ENCODE measurements at regions of chr14 and their contacts with region 1.

Region 1: GRCh38 chr14:58549105-58549755 is 88.5 kb upstream of the DACT1 start:
- DNase-seq: no peak
- ATAC-seq: no peak
- H3K4me3 Mint-ChIP-seq: no peak overlapping the region
- H3K27ac Mint-ChIP-seq: no peak overlapping the region
- H3K4me1 Mint-ChIP-seq: peaks cover 6% of the 10 kb centered on the region
- H3K27me3 Mint-ChIP-seq: no peaks in the 10 kb centered on the region

Region 2: DNA sequence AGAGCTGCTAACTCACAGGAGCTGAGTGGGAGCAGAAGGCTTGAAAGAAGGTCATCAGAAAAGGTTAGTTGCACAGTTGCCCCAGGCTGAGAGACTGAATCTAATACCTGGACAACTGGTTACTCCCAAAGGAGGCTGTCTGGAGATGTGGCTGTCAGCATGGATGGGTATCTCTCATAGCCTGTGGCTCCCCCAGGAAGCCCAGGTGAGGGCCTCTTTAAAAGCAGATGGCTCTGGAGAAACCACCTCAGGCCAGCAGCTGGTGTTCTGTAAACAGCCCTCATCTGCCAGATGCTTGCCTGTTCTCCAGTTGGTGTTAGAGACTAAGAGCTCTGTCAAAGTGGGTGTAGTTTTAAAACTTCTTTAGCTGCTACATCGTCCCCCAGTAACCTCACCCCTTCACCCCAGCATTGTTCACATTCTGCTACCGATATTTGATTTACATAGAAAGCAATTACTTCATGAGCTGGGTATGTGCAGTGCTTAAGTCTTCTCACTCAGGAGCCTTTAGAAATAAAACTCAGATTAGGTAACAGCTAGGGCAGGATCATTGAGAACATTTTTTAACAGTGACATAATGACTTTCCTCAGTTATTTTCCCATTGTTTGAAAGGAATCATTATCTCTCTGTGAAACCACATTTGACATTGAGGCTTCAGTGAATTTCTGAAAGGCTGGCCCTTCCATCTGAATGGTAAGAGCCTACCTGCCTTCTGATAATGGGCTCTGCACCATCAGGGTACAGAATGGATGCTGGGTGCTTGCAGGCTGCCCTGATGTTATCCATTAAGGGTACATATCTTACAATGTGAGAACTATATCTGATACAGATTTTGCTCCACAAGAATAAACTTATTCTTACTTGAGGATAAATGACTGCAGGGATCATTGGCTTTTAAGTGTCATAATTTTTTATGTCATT is 114.5 kb after region 1 on chr14:
- CTCF ChIA-PET with region 1: no interaction called
- POLR2A ChIA-PET with region 1: no interaction called
- intact Hi-C with region 1: no loop called
- DNase-seq: no peak
- ATAC-seq: no peak
- H3K4me3 Mint-ChIP-seq: no peak overlapping the region
- H3K27ac Mint-ChIP-seq: no peak overlapping the region
- H3K4me1 Mint-ChIP-seq: peaks cover 22% of the 10 kb centered on the region
- H3K27me3 Mint-ChIP-seq: no peaks in the 10 kb centered on the region

Region 3: GRCh38 chr14:59771577-59771976 is 1222.3 kb after region 1 on chr14:
- CTCF ChIA-PET with region 1: no interaction called
- POLR2A ChIA-PET with region 1: no interaction called
- intact Hi-C with region 1: loop called in 1 of 2 experiments (anchors 5 kb)
- DNase-seq: no peak
- ATAC-seq: no peak
- H3K4me3 Mint-ChIP-seq: no peak overlapping the region
- H3K27ac Mint-ChIP-seq: no peak overlapping the region
- H3K4me1 Mint-ChIP-seq: no peaks in the 10 kb centered on the region
- H3K27me3 Mint-ChIP-seq: peaks cover 5% of the 10 kb centered on the region

Measured in activated CD4-positive, alpha-beta T cell treated with anti-CD3 and anti-CD28 coated beads for 36 hours (primary cell).